ENCODE measurements at regions of chr9 and their contacts with region 1.

Region 1: GRCh38 chr9:116572095-116572748 is 114.9 kb upstream of the TRIM32 start:
- DNase-seq: peak; percentile 75 to 87
- H3K4me3 ChIP-seq: no peak overlapping the region
- H3K27ac ChIP-seq: no peak overlapping the region
- H3K4me1 ChIP-seq: peaks cover 0 to 10% (median 3%) of the 10 kb centered on the region in 4 donors
- H3K27me3 ChIP-seq: no peaks in the 10 kb centered on the region
- CTCF ChIP-seq: peak; percentile 83 to 90

Region 2: GRCh38 chr9:116149844-116150243 is 422.4 kb before region 1 on chr9:
- intact Hi-C with region 1: loop called (anchors 10 kb)
- DNase-seq: no peak
- H3K4me3 ChIP-seq: no peak overlapping the region
- H3K27ac ChIP-seq: no peak overlapping the region
- H3K4me1 ChIP-seq: peaks cover 0 to 21% (median 14%) of the 10 kb centered on the region in 4 donors
- H3K27me3 ChIP-seq: no peaks in the 10 kb centered on the region
- CTCF ChIP-seq: peak; percentile 29 to 36

Region 3: GRCh38 chr9:116365056-116365471 is 207.2 kb before region 1 on chr9:
- intact Hi-C with region 1: loop called (anchors 5 kb)
- DNase-seq: peak; percentile 34 to 77
- H3K4me3 ChIP-seq: no peak overlapping the region
- H3K27ac ChIP-seq: peak overlapping the region; percentile 18 to 45
- H3K4me1 ChIP-seq: peaks cover 0 to 6% (median 0%) of the 10 kb centered on the region in 4 donors
- H3K27me3 ChIP-seq: no peaks in the 10 kb centered on the region
- CTCF ChIP-seq: peak; percentile 28 to 47

Region 4: GRCh38 chr9:116661037-116661954 is 89.1 kb after region 1 on chr9:
- intact Hi-C with region 1: no loop called
- DNase-seq: no peak
- H3K4me3 ChIP-seq: no peak overlapping the region
- H3K27ac ChIP-seq: no peak overlapping the region
- H3K4me1 ChIP-seq: peaks cover 0 to 15% (median 13%) of the 10 kb centered on the region in 4 donors
- H3K27me3 ChIP-seq: no peaks in the 10 kb centered on the region
- CTCF ChIP-seq: peak; percentile 64 to 66